ENCODE measurements at regions of chr1 and their contacts with region 1.

Region 1: DNA sequence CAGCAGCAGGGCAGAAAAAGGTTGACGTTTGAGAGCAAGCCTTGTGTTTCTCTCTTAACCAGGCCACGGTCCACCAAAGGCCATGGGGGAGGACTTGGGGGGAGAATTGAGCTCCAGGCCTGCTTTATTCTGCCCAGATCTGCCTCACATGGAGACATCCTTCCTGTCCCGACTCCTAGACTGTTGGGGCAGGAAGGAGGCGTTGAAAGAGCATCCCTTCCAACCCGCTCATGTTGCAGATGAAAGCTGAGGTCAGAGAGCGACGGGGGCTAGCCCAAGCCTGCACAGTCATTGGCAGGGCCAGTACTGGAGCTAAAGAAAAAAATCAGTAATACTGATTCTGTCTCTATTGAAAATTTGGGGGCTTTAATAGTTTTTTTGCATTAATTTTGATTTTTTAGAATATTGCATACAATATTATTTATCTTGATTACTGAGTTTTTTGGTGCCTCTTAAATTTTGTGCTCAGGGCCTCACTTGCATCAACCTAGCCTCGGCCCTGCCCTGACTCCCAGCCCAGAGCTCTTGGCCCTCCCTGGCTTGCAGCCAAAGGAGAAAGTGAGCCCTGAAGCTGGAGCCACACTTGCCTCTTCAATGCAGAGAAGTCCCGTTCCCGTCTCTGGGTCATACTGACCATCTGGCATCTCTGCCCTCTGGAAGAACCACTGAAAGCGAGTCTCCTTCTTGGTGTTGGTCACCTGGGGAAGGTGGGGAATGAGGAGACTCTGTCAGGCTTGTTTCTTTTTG is 46.5 kb downstream of the MYOM3 start:
- DNase-seq: no peak

Region 2: DNA sequence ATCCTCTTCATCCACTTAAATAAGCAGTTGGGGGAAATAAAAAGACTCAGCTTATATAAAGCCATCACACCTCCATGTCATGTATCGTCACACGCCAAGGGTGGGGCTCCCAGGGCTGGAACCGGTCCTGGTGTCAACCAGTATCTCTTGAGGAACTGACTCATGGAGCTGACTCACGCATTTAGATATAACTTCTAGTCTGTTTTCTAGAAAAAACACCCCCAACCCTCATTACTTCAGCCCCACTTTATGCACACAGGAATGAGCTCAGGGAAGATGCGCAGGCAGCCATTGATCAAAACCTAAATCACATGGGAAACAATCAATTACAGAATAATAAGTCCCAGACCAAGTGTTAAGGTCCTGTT is 84.4 kb after region 1 on chr1:
- in situ Hi-C with region 1: loop called (anchors 10 kb)
- DNase-seq: no peak

Region 3: GRCh38 chr1:24201941-24202440 is 136.5 kb after region 1 on chr1:
- in situ Hi-C with region 1: no loop called
- DNase-seq: peak; percentile 98

Region 4: DNA sequence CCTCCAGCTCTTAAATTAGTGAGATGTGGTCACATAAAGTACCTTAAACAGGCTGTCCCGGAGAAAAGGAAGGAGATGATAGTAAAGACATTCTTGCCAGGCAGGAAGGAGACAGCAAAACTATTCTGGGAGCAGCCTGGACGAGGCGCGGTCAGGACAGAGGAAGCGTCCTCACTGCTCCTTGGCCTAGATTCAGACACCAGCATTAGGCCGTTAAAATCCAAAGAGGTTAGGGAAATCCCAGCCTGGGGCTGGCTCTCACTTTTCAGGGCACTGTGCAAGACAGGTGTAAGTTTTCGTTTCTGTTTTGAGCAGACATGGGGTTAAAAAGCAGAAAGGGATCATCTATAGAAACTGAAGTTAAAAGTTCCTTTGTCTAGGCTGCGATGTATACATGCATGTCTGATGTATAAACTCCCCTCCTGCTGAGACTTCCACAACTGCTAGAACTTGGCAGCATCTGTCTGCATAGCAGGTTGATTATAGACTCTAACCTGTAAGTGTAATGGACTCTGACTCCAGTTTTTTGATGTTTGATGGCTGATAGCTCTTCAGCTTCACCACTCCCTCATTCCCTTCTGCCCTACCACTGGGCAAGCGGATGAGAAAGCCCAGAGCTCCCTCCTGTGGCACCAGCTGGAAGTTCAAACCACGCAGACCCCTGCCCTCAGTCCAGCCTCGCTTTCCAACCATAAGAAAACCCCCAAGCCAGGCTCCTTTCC is 326.6 kb after region 1 on chr1:
- in situ Hi-C with region 1: loop called (anchors 10 kb)
- DNase-seq: peak; percentile 79

Measured in G401 (cell line).